ENCODE measurements at regions of chr15 and their contacts with region 1.

Region 1: DNA sequence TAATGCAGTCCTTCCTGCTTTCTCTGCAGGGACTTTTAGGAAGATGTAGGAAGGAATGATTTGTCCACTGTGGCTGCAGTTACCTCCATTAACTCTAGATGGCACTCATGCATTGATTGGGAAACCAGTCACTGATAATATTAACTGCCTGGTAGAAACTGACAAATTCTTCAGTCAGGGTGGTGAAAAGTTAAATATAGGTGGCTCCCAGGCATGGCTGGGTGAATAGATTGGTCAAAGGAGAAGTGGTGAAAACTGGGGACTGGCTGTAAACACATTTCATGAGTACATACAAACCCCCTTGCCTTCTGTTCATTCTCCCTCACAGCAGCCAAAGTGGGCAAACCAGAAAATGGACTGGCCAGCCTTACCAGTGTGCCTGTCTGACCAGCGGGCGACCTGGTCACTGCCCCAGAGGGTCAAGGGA is 333.4 kb downstream of the THSD4 start:
- DNase-seq: no peak

Region 2: DNA sequence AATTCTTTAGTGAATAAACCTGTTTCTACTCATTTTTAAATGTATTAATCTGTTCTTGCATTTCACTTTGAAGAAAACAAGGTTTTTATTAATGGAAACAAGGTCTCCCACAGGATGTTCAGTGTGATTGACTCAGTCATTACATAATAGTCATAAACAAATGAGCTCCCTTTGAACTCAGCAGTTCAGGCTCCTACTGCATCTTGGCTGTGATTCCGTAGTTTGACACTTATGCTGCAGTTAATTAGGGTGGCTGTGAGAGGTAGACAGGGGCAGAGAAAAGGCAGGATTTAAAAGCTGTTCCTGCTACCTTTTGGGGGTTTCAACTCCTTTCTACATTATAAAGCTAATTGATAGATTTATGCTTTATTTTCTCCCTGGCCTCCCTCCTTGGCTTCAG is 16.4 kb after region 1 on chr15:
- intact Hi-C with region 1: no loop called
- DNase-seq: no peak

Region 3: GRCh38 chr15:71575474-71576045 is 126.9 kb after region 1 on chr15:
- intact Hi-C with region 1: loop called (anchors 5 kb)
- DNase-seq: no peak

Region 4: DNA sequence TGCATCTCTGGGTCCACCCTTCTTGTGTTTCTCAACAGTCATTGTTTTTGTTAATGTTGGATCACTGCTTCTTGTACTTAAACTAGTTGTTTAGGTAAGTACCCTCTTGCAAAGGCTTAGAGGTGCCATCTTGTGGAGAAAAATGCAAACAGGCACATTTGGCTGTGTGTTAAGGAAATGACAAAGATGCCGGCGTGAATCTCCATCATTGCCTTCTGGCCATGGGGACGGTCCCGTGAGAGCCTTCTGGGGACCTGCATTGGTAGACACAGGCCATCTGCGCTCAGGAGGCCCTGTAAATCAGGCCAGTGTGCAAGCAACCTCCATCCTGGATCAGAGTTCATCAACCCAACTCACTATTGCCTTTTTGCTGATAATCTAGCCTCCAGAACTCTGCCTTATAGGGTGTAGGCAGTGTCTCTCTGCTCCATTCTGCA is 203.1 kb after region 1 on chr15:
- intact Hi-C with region 1: loop called (anchors 5 kb)
- DNase-seq: no peak

Region 5: GRCh38 chr15:71730277-71731144 is 281.8 kb after region 1 on chr15:
- intact Hi-C with region 1: loop called (anchors 2 kb)
- DNase-seq: no peak